A549 (cell line): ENCODE measurements at regions of chr13 and their contacts with region 1.

Region 1: DNA sequence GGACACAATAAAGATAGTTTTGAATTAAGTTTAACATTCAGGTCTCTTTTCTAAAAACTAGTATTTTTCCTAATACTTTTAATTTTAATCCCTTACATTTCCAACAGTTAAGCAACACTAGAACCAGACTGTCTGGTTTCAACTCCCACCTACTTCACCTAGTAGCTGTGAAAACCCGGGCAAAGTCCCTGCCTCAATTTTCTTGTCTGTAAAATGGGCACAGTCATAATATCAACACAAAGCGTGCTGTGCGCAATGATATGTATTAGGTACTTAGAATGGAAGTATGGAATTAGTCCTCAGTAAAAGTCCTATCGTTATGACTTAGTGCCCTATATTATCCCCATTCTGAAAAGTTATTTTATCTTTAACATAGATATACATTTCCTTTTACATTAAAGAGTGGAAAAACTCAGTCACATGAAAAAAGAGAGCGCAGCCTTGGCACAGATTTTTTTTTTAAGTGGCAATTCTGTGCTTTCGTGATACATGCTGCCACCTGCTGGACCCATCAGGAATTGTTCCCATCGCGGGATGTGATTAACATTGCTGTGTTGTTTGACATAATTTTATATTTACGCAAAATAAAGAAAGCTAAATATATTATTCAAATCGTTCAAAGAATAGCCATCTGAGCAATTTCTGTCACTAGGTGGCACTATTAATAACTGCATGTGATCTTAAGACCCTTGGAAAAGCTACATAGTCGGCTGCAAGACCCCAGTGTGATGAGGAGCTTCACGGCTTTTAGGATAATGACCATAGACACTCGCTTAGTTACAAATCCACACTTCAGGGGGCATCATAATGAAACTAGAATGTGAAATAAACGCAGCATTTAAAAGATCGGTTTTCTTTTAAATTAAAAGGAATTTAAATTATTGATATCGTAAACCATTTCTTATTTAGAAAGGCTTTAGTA is 59.9 kb downstream of the LIG4 start:
- DNase-seq: peak in 1 of 2 experiments; percentile 29
- ATAC-seq: no peak
- H3K4me3 ChIP-seq: no peak overlapping the region
- H3K27ac ChIP-seq: no peak overlapping the region
- H3K4me1 ChIP-seq: no peaks in the 10 kb centered on the region
- CTCF ChIP-seq: peak; percentile 52
- EP300 ChIP-seq: no peak
- POLR2A ChIP-seq: no peak
- RAD21 ChIP-seq: peak; percentile 45 to 47; a peak in 4 of 5 replicates

Region 2: GRCh38 chr13:107211073-107211472 is 944.4 kb before region 1 on chr13:
- CTCF ChIA-PET with region 1: interaction called, 22 read pairs
- POLR2A ChIA-PET with region 1: no interaction called
- DNase-seq: peak; percentile 25 to 61
- ATAC-seq: peak; percentile 94 to 95
- H3K4me3 ChIP-seq: no peak overlapping the region
- H3K27ac ChIP-seq: no peak overlapping the region
- H3K4me1 ChIP-seq: no peaks in the 10 kb centered on the region
- CTCF ChIP-seq: peak; percentile 58
- EP300 ChIP-seq: no peak
- POLR2A ChIP-seq: no peak
- RAD21 ChIP-seq: peak; percentile 69 to 72

Region 3: DNA sequence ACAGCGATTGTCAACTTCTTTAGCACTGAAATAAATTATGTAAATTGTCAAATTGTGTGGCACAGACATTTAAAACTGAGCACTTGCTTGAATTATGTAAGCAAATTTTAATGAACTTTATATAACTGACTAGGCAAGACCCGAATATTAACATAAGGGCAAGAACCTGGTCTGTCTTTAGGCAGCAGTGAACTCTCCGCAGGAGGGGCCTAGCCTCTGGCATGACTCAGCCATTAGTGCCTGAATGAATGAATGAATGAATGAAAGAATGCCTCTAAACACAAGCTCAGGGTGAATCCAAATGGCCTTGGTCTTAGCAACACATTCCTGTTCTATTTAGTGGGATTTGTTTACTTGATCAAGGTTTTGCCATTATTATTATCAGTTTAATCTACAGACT is 932.8 kb before region 1 on chr13:
- CTCF ChIA-PET with region 1: no interaction called
- POLR2A ChIA-PET with region 1: no interaction called
- DNase-seq: no peak
- ATAC-seq: no peak
- H3K4me3 ChIP-seq: no peak overlapping the region
- H3K27ac ChIP-seq: no peak overlapping the region
- H3K4me1 ChIP-seq: no peaks in the 10 kb centered on the region
- CTCF ChIP-seq: no peak
- EP300 ChIP-seq: no peak
- POLR2A ChIP-seq: no peak
- RAD21 ChIP-seq: no peak

Region 4: GRCh38 chr13:107867701-107868661 is 287.5 kb before region 1 on chr13:
- CTCF ChIA-PET with region 1: no interaction called
- POLR2A ChIA-PET with region 1: no interaction called
- DNase-seq: peak in 1 of 2 experiments; percentile 15
- ATAC-seq: peak; percentile 67 to 87
- H3K4me3 ChIP-seq: peak overlapping the region; percentile 53
- H3K27ac ChIP-seq: no peak overlapping the region
- H3K4me1 ChIP-seq: no peaks in the 10 kb centered on the region
- CTCF ChIP-seq: peak; percentile 27
- EP300 ChIP-seq: no peak
- POLR2A ChIP-seq: no peak
- RAD21 ChIP-seq: peak; percentile 36 to 49; a peak in 4 of 5 replicates

Region 5: DNA sequence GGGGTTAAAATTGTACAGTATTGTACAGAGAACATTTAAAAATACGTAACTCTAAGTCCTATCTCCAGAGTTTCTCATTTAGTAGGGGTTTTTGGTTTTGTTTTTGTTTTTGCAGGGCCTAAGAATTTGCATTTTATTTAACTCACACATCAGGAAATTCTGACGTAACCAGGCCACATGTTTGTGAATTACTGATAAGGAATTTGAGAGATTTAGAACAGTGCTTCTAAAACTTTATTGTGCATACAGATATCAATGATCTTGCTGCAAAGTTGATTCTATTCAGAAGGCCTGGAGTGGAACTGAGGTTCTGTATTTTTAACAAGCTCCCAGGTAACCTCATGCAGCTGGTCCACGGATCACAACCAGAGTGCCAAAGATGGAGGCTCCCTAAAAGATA is 10.6 kb after region 1 on chr13:
- CTCF ChIA-PET with region 1: interaction called, 12 read pairs
- POLR2A ChIA-PET with region 1: no interaction called
- DNase-seq: no peak
- ATAC-seq: no peak
- H3K4me3 ChIP-seq: no peak overlapping the region
- H3K27ac ChIP-seq: no peak overlapping the region
- H3K4me1 ChIP-seq: no peaks in the 10 kb centered on the region
- CTCF ChIP-seq: no peak
- EP300 ChIP-seq: no peak
- POLR2A ChIP-seq: no peak
- RAD21 ChIP-seq: no peak